Activated B cell treated with CpG ODN at 0.5 μM for 24 hours (primary cell): ENCODE measurements at regions of chr14 and their contacts with region 1.

Region 1: DNA sequence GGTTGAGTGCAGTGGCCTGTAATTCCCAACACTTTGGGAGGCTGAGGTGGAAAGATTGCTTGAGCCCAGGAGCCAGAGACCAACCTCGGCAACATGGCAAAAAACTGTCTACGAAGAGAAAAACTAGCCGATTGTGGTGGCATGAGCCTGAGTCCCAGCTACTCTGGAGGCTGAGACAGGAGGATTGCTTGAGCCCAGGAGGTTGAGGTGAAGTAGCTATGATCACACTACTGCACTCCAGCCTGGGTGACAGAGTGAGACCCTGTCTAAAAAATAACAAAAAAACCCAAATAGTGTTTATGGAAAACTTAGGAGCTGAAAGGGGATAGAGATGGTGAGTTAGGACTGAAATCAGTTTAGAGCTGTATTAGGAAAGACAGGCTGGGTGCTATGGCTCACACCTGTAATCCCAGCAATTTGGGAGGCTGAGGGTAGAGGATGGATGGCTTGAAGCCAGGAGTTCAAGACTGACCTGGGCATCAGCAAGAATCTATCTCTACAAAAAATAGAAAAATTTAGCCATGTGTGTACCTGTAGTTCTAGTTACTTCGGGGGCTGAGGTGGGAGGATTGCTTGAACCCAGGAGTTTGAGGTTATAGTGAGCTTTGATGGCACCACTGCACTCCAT is 9.7 kb downstream of the PNN start:
- DNase-seq: no peak
- ATAC-seq: no peak
- H3K4me3 Mint-ChIP-seq: no peak overlapping the region
- H3K27ac Mint-ChIP-seq: no peak overlapping the region
- H3K4me1 Mint-ChIP-seq: no peaks in the 10 kb centered on the region
- H3K27me3 Mint-ChIP-seq: no peaks in the 10 kb centered on the region
- CTCF ChIP-seq: no peak

Region 2: GRCh38 chr14:38775986-38776385 is 408.8 kb before region 1 on chr14:
- CTCF ChIA-PET with region 1: no interaction called
- POLR2A ChIA-PET with region 1: no interaction called
- intact Hi-C with region 1: no loop called
- DNase-seq: no peak
- ATAC-seq: no peak
- H3K4me3 Mint-ChIP-seq: no peak overlapping the region
- H3K27ac Mint-ChIP-seq: no peak overlapping the region
- H3K4me1 Mint-ChIP-seq: no peaks in the 10 kb centered on the region
- H3K27me3 Mint-ChIP-seq: no peaks in the 10 kb centered on the region
- CTCF ChIP-seq: no peak

Region 3: GRCh38 chr14:39169541-39169900 is 15.2 kb before region 1 on chr14:
- CTCF ChIA-PET with region 1: no interaction called
- POLR2A ChIA-PET with region 1: interaction called, 15 read pairs
- intact Hi-C with region 1: no loop called
- DNase-seq: no peak
- ATAC-seq: no peak
- H3K4me3 Mint-ChIP-seq: peak overlapping the region; percentile 98
- H3K27ac Mint-ChIP-seq: peak overlapping the region; percentile 98
- H3K4me1 Mint-ChIP-seq: peaks cover 39% of the 10 kb centered on the region
- H3K27me3 Mint-ChIP-seq: no peaks in the 10 kb centered on the region
- CTCF ChIP-seq: no peak

Region 4: GRCh38 chr14:40312296-40312695 is 1127.6 kb after region 1 on chr14:
- CTCF ChIA-PET with region 1: no interaction called
- POLR2A ChIA-PET with region 1: no interaction called
- intact Hi-C with region 1: no loop called
- DNase-seq: no peak
- ATAC-seq: no peak
- H3K4me3 Mint-ChIP-seq: no peak overlapping the region
- H3K27ac Mint-ChIP-seq: no peak overlapping the region
- H3K4me1 Mint-ChIP-seq: no peaks in the 10 kb centered on the region
- H3K27me3 Mint-ChIP-seq: no peaks in the 10 kb centered on the region
- CTCF ChIP-seq: no peak